Endothelial cell of umbilical vein (primary cell): ENCODE measurements at regions of chr14 and their contacts with region 1.

Region 1: GRCh38 chr14:60248697-60249318 is at the start of gene PPM1A:
- DNase-seq: peak; percentile 96
- H3K4me3 ChIP-seq: peak within 1 kb of the TSS; percentile 81 to 98 (median 96)
- H3K27ac ChIP-seq: peak within 1 kb of the TSS; percentile 85
- H3K4me1 ChIP-seq: peaks cover 26% of the 10 kb centered on the region
- H3K27me3 ChIP-seq: no peaks in the 10 kb centered on the region
- CTCF ChIP-seq: no peak
- POLR2A ChIP-seq: peak; percentile 65
- total RNA-seq, gene PPM1A: 33.9 and 36.4 TPM in 2 replicates

Region 2: GRCh38 chr14:59964251-59965007 is 284.4 kb before region 1 on chr14:
- CTCF ChIA-PET with region 1: interaction called, 5 read pairs
- POLR2A ChIA-PET with region 1: no interaction called
- dilution Hi-C with region 1: no loop called
- intact Hi-C with region 1: loop called (anchors 1 kb)
- DNase-seq: no peak
- H3K4me3 ChIP-seq: no peak overlapping the region
- H3K27ac ChIP-seq: no peak overlapping the region
- H3K4me1 ChIP-seq: no peaks in the 10 kb centered on the region
- H3K27me3 ChIP-seq: peaks cover 5 to 21% of the 10 kb centered on the region in 2 experiments
- CTCF ChIP-seq: no peak
- POLR2A ChIP-seq: no peak

Region 3: GRCh38 chr14:60164712-60165546 is 83.9 kb before region 1 on chr14 and contains the start of gene DHRS7:
- CTCF ChIA-PET with region 1: no interaction called
- POLR2A ChIA-PET with region 1: no interaction called
- dilution Hi-C with region 1: no loop called
- intact Hi-C with region 1: loop called (anchors 1 kb)
- DNase-seq: peak; percentile 82
- H3K4me3 ChIP-seq: peak within 1 kb of the TSS; percentile 46 to 84 (median 79)
- H3K27ac ChIP-seq: peak within 1 kb of the TSS; percentile 22
- H3K4me1 ChIP-seq: peaks cover 10% of the 10 kb centered on the region
- H3K27me3 ChIP-seq: no peaks in the 10 kb centered on the region
- CTCF ChIP-seq: peak; percentile 12 to 21
- POLR2A ChIP-seq: peak; percentile 59
- total RNA-seq, gene DHRS7: 29.3 and 35.7 TPM in 2 replicates

Region 4: DNA sequence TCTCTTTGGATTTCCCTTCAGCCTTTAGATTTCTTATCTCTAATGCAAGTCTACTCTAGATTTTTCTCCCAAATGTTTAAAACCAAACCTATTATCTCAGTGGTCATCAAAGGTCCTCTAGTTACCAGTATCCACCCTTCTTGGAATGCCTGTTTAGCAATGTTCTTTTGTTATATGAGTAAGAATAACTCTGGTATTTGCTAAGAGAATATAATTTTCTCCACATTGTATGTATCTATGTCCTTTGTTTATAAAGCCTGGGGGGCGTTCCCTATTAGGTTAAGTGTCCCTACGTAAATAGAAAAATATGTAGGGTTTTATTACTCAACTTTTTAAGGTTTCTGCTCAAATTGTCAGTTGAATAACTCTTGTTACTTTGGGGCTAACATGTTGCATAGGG is 27.5 kb after region 1 on chr14:
- CTCF ChIA-PET with region 1: no interaction called
- POLR2A ChIA-PET with region 1: no interaction called
- dilution Hi-C with region 1: no loop called
- intact Hi-C with region 1: no loop called
- DNase-seq: no peak
- H3K4me3 ChIP-seq: no peak overlapping the region
- H3K27ac ChIP-seq: no peak overlapping the region
- H3K4me1 ChIP-seq: no peaks in the 10 kb centered on the region
- H3K27me3 ChIP-seq: no peaks in the 10 kb centered on the region
- CTCF ChIP-seq: no peak
- POLR2A ChIP-seq: no peak

Region 5: GRCh38 chr14:60288279-60288678 is 39.5 kb after region 1 on chr14:
- CTCF ChIA-PET with region 1: no interaction called
- POLR2A ChIA-PET with region 1: no interaction called
- dilution Hi-C with region 1: no loop called
- intact Hi-C with region 1: loop called (anchors 5 kb)
- DNase-seq: no peak
- H3K4me3 ChIP-seq: no peak overlapping the region
- H3K27ac ChIP-seq: no peak overlapping the region
- H3K4me1 ChIP-seq: no peaks in the 10 kb centered on the region
- H3K27me3 ChIP-seq: no peaks in the 10 kb centered on the region
- CTCF ChIP-seq: no peak
- POLR2A ChIP-seq: no peak

Region 6: GRCh38 chr14:60485598-60486251 is 236.9 kb after region 1 on chr14 and contains the start of gene C14orf39:
- CTCF ChIA-PET with region 1: no interaction called
- POLR2A ChIA-PET with region 1: no interaction called
- dilution Hi-C with region 1: no loop called
- intact Hi-C with region 1: loop called (anchors 10 kb)
- DNase-seq: peak; percentile 34
- H3K4me3 ChIP-seq: peak within 1 kb of the TSS; percentile 11 to 27 (median 25)
- H3K27ac ChIP-seq: no peak within 1 kb of the TSS
- H3K4me1 ChIP-seq: no peaks in the 10 kb centered on the region
- H3K27me3 ChIP-seq: peaks cover 25 to 69% of the 10 kb centered on the region in 2 experiments
- CTCF ChIP-seq: no peak
- POLR2A ChIP-seq: no peak
- total RNA-seq, gene C14orf39: not detected in 2 replicates

Region 7: GRCh38 chr14:61280526-61281185 is 1031.8 kb after region 1 on chr14:
- CTCF ChIA-PET with region 1: no interaction called
- POLR2A ChIA-PET with region 1: no interaction called
- dilution Hi-C with region 1: no loop called
- intact Hi-C with region 1: loop called (anchors 5 kb)
- DNase-seq: peak; percentile 86
- H3K4me3 ChIP-seq: peak overlapping the region; percentile 12 to 37 (median 28)
- H3K27ac ChIP-seq: no peak overlapping the region
- H3K4me1 ChIP-seq: peaks cover 15% of the 10 kb centered on the region
- H3K27me3 ChIP-seq: peaks cover 0 to 2% of the 10 kb centered on the region in 2 experiments
- CTCF ChIP-seq: peak; percentile 60 to 76
- POLR2A ChIP-seq: peak; percentile 33